K562 (cell line): ENCODE measurements at regions of chr2 and their contacts with region 1.

Region 1: GRCh38 chr2:110677530-110678456 is at the start of gene BUB1:
- DNase-seq: peak; percentile 99 to 100 (median 100)
- ATAC-seq: peak; percentile 95
- H3K4me3 ChIP-seq: peak within 1 kb of the TSS; percentile 69
- H3K27ac ChIP-seq: peak within 1 kb of the TSS; percentile 99
- H3K4me1 ChIP-seq: peaks cover 17 to 28% of the 10 kb centered on the region in 2 experiments
- H3K27me3 ChIP-seq: no peaks in the 10 kb centered on the region
- CTCF ChIP-seq: no peak
- EP300 ChIP-seq: peak; percentile 71
- POLR2A ChIP-seq: peak; percentile 98
- RAD21 ChIP-seq: no peak
- polyA plus RNA-seq, gene BUB1: 73.4 to 118 TPM

Region 2: GRCh38 chr2:110657724-110658305 is 20.0 kb before region 1 on chr2:
- CTCF ChIA-PET with region 1: no interaction called
- POLR2A ChIA-PET with region 1: interaction called, 12 read pairs
- in situ Hi-C with region 1: no loop called
- intact Hi-C with region 1: no loop called
- DNase-seq: no peak
- ATAC-seq: no peak
- H3K4me3 ChIP-seq: no peak overlapping the region
- H3K27ac ChIP-seq: no peak overlapping the region
- H3K4me1 ChIP-seq: no peaks in the 10 kb centered on the region
- H3K27me3 ChIP-seq: no peaks in the 10 kb centered on the region
- CTCF ChIP-seq: no peak
- EP300 ChIP-seq: no peak
- POLR2A ChIP-seq: 0 out of 2 replicates have a peak, but pooled peaks have one; percentile 26
- RAD21 ChIP-seq: no peak

Region 3: DNA sequence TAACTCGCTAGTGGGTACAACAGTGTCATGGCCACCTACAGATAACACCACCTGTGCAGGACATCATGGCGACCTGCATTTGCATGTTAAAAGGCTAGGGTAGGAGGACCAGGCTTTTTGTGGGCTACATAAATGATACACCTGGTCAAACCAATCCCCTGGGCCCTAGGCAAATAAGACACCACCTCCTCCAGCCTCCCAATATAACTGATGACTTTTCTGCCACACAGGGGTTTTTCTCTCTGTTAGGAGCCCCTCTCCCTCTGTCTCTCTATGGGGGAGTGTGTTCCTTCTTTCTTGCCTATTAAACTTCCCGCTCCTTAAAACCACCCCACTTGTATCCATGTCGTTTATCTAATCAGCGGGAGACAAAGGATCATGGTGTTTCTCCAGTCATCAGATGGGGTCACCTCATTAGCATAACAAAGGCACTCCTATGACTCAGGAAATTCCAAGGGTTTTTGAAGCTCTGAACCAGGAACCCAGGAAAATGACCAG is 10.8 kb after region 1 on chr2:
- CTCF ChIA-PET with region 1: no interaction called
- POLR2A ChIA-PET with region 1: interaction called, 14 read pairs
- in situ Hi-C with region 1: no loop called
- intact Hi-C with region 1: no loop called
- DNase-seq: no peak
- ATAC-seq: no peak
- H3K4me3 ChIP-seq: no peak overlapping the region
- H3K27ac ChIP-seq: no peak overlapping the region
- H3K4me1 ChIP-seq: peaks cover 14 to 38% of the 10 kb centered on the region in 2 experiments; a peak in 4 of 5 replicates
- H3K27me3 ChIP-seq: no peaks in the 10 kb centered on the region
- CTCF ChIP-seq: no peak
- EP300 ChIP-seq: no peak
- POLR2A ChIP-seq: no peak
- RAD21 ChIP-seq: no peak

Region 4: GRCh38 chr2:110755491-110756078 is 77.8 kb after region 1 on chr2:
- CTCF ChIA-PET with region 1: no interaction called
- POLR2A ChIA-PET with region 1: interaction called, 4 read pairs
- in situ Hi-C with region 1: no loop called
- intact Hi-C with region 1: loop called (anchors 5 kb)
- DNase-seq: peak in 1 of 4 experiments; percentile 37
- ATAC-seq: no peak
- H3K4me3 ChIP-seq: no peak overlapping the region
- H3K27ac ChIP-seq: no peak overlapping the region
- H3K4me1 ChIP-seq: no peaks in the 10 kb centered on the region; a peak in 1 of 5 replicates
- H3K27me3 ChIP-seq: peaks cover 0 to 2% of the 10 kb centered on the region in 2 experiments; a peak in 2 of 5 replicates
- CTCF ChIP-seq: peak in 2 of 3 experiments; percentile 40 to 74; a peak in 4 of 6 replicates
- EP300 ChIP-seq: no peak
- POLR2A ChIP-seq: no peak
- RAD21 ChIP-seq: peak; percentile 74 to 86